Gastrocnemius medialis (tissue), 4 donors: ENCODE measurements at regions of chr9 and their contacts with region 1.

Region 1: GRCh38 chr9:109012876-109013678 is at the start of gene CTNNAL1:
- DNase-seq: peak; percentile 89 to 92
- ATAC-seq: peak; percentile 79 to 80
- H3K4me3 ChIP-seq: peak within 1 kb of the TSS; percentile 78 to 96 (median 89)
- H3K27ac ChIP-seq: peak within 1 kb of the TSS; percentile 92 to 96 (median 93)
- H3K4me1 ChIP-seq: peaks cover 39 to 42% of the 10 kb centered on the region in 2 donors
- H3K27me3 ChIP-seq: no peaks in the 10 kb centered on the region
- CTCF ChIP-seq: peak in 1 of 5 experiments; percentile 5
- POLR2A ChIP-seq: peak; percentile 93 to 95
- total RNA-seq, gene CTNNAL1: 17.8 to 75.4 (median 44.8) TPM

Region 2: DNA sequence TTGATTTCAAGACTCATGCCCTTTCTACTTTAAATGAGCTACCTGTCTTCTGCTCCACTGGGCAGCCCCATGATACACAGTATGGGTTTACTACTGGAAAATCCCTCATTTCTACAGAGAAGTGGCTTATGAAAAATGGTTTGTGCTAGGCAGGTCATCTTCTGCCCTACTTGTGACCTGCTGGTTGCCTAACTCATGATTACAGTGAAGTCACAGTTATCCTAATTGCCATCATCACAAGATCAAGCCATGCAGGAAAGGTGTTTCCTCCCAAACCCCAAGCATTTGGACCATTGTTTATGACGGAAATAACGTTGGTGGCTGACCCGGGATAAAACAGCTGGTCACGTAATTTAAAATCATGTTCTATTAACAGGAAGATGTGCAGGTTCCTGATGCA is 487.9 kb before region 1 on chr9:
- in situ Hi-C with region 1: no loop called
- intact Hi-C with region 1: no loop called
- DNase-seq: no peak
- ATAC-seq: peak; percentile 41 to 77
- H3K4me3 ChIP-seq: no peak overlapping the region
- H3K27ac ChIP-seq: peak overlapping the region; percentile 47 to 53 (median 52)
- H3K4me1 ChIP-seq: no peaks in the 10 kb centered on the region
- H3K27me3 ChIP-seq: no peaks in the 10 kb centered on the region
- CTCF ChIP-seq: no peak
- POLR2A ChIP-seq: no peak

Region 3: GRCh38 chr9:108603141-108603540 is 409.9 kb before region 1 on chr9:
- in situ Hi-C with region 1: no loop called
- intact Hi-C with region 1: no loop called
- DNase-seq: no peak
- ATAC-seq: no peak
- H3K4me3 ChIP-seq: no peak overlapping the region
- H3K27ac ChIP-seq: no peak overlapping the region
- H3K4me1 ChIP-seq: no peaks in the 10 kb centered on the region
- H3K27me3 ChIP-seq: no peaks in the 10 kb centered on the region
- CTCF ChIP-seq: no peak
- POLR2A ChIP-seq: no peak

Region 4: DNA sequence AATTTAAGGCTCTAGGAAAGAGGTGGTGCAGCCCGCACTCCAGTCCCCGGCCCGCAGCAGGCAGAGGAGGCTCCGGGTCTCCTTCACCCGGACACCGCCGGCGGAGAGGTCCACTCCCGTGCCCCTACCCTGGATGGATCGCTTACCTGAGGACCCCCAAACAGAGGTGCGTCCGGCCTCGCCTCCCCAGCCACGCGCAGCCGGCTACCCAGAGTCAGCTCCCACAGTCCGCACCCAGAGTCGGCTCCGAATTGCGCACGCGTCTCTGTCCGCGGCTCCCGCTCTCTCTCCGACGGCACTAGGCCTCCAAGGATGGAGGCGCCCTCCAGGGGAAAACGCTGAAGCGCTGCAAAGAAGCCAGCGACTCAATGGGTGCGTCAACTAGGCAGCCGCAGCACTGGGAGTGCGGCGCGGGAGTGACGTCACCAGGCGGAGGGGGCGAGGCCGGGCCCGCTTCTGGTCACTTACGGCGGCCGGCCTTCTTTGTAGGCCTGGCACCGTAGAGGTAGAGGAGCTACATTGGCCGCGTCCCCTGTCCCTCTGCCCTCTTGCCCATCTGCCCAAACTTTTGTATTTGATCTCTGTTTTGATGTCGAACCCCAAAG is 79.3 kb before region 1 on chr9 and contains the start of gene ELP1:
- in situ Hi-C with region 1: no loop called
- intact Hi-C with region 1: loop called (anchors 2 kb)
- DNase-seq: peak; percentile 79 to 83
- ATAC-seq: peak; percentile 85 to 90
- H3K4me3 ChIP-seq: peak within 1 kb of the TSS; percentile 86 to 97 (median 91)
- H3K27ac ChIP-seq: peak within 1 kb of the TSS; percentile 84 to 94 (median 88)
- H3K4me1 ChIP-seq: peaks cover 16 to 24% of the 10 kb centered on the region in 2 donors
- H3K27me3 ChIP-seq: no peaks in the 10 kb centered on the region
- CTCF ChIP-seq: peak in 2 of 5 experiments; percentile 11 to 21
- POLR2A ChIP-seq: peak in 1 of 2 donors; percentile 24
- total RNA-seq, gene ELP1: 9.4 to 24.3 (median 13.5) TPM

Region 5: DNA sequence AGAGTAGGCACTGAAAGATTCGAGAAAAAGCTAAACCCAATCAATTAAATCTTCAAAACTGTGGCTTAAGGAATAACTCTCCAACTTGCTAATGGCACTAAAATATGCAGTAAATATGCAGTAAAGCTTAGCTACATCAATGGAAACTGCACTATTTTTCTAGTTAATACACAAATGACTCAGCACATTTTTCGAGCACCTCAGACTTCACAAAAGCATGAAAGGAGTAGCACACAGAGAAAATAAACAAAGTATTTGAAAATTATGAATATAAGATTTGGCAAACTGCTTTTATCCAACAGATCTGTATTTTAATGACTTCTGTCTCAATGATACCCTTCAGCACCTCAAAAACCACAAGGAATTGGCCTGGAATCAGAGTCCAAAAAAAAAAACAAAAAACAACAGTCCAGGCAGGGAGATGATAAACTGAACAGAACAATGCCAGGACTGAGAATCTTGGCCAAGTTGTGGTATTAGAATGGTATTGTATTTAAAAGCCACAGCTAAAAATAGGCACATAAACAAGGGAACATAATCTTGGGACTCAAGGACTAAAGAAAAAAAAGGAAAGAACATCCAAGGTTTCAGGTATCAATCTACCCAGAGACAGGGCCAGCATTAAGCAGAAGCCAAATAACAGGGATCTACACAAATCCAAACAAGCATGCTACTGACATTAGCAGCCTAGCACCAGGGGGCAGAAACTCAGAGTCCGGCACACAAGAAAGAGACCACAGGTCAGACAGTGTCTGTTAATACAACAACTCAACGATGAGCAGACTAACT is 85.3 kb after region 1 on chr9:
- in situ Hi-C with region 1: no loop called
- intact Hi-C with region 1: loop called (anchors 5 kb)
- DNase-seq: peak; percentile 58 to 78
- ATAC-seq: peak; percentile 90 to 92
- H3K4me3 ChIP-seq: peak overlapping the region; percentile 8 to 21 (median 11)
- H3K27ac ChIP-seq: peak overlapping the region; percentile 83 to 86 (median 84)
- H3K4me1 ChIP-seq: peaks cover 88 to 93% of the 10 kb centered on the region in 2 donors
- H3K27me3 ChIP-seq: no peaks in the 10 kb centered on the region
- CTCF ChIP-seq: peak in 4 of 5 experiments; percentile 20 to 58 (median 44)
- POLR2A ChIP-seq: peak in 1 of 2 donors; percentile 32